ENCODE measurements at regions of chr7 and their contacts with region 1.

Region 1: GRCh38 chr7:105876091-105876963 is at the start of gene ATXN7L1:
- DNase-seq: peak; percentile 83 to 96 (median 92)
- ATAC-seq: peak; percentile 90
- H3K4me3 ChIP-seq: peak within 1 kb of the TSS; percentile 96
- H3K4me3 Mint-ChIP-seq: peak within 1 kb of the TSS; percentile 99
- H3K27ac ChIP-seq: peak within 1 kb of the TSS; percentile 55 to 77
- H3K27ac Mint-ChIP-seq: peak within 1 kb of the TSS; percentile 98
- H3K4me1 ChIP-seq: peaks cover 47% of the 10 kb centered on the region
- H3K4me1 Mint-ChIP-seq: peaks cover 81% of the 10 kb centered on the region
- H3K27me3 ChIP-seq: no peaks in the 10 kb centered on the region
- H3K27me3 Mint-ChIP-seq: no peaks in the 10 kb centered on the region
- CTCF ChIP-seq: peak; percentile 12
- total RNA-seq, gene ATXN7L1: 27.3 to 29.2 TPM

Region 2: DNA sequence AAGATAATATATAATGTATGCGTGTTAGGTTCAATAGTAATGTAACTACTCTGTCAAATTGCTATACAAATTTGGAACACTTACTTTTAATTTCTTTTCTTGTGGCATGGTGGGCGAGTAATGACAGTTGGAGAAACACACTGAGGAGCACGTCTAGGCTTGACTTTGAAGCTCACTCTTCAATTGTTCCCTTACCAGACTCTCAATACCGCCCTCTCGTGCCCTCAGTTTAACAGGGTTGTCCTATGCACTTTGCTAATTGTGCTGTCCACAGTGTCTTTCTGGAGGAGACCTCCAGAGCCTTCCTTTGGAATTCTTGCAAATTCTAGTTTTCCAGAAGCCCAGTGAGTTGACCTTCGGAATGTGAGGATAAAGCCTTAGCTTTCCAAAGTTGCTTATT is 1779.6 kb before region 1 on chr7:
- CTCF ChIA-PET with region 1: no interaction called
- POLR2A ChIA-PET with region 1: no interaction called
- intact Hi-C with region 1: no loop called
- DNase-seq: no peak
- ATAC-seq: no peak
- H3K4me3 ChIP-seq: no peak overlapping the region
- H3K4me3 Mint-ChIP-seq: no peak overlapping the region
- H3K27ac ChIP-seq: no peak overlapping the region
- H3K27ac Mint-ChIP-seq: no peak overlapping the region
- H3K4me1 ChIP-seq: no peaks in the 10 kb centered on the region
- H3K4me1 Mint-ChIP-seq: no peaks in the 10 kb centered on the region
- H3K27me3 ChIP-seq: peaks cover 0 to 2% of the 10 kb centered on the region in 2 experiments
- H3K27me3 Mint-ChIP-seq: peaks cover 33% of the 10 kb centered on the region
- CTCF ChIP-seq: no peak

Region 3: GRCh38 chr7:105522062-105522936 is 354.0 kb before region 1 on chr7 and contains the start of gene PUS7:
- CTCF ChIA-PET with region 1: interaction called, 4 read pairs
- POLR2A ChIA-PET with region 1: no interaction called
- intact Hi-C with region 1: loop called in 1 of 2 experiments (anchors 10 kb)
- DNase-seq: peak; percentile 61 to 92 (median 76)
- ATAC-seq: peak; percentile 94
- H3K4me3 ChIP-seq: peak within 1 kb of the TSS; percentile 57
- H3K4me3 Mint-ChIP-seq: peak within 1 kb of the TSS; percentile 98
- H3K27ac ChIP-seq: peak within 1 kb of the TSS; percentile 21 to 67
- H3K27ac Mint-ChIP-seq: peak within 1 kb of the TSS; percentile 85
- H3K4me1 ChIP-seq: peaks cover 18% of the 10 kb centered on the region
- H3K4me1 Mint-ChIP-seq: peaks cover 15% of the 10 kb centered on the region
- H3K27me3 ChIP-seq: no peaks in the 10 kb centered on the region
- H3K27me3 Mint-ChIP-seq: no peaks in the 10 kb centered on the region
- CTCF ChIP-seq: no peak
- total RNA-seq, gene PUS7: 2.7 TPM

Region 4: DNA sequence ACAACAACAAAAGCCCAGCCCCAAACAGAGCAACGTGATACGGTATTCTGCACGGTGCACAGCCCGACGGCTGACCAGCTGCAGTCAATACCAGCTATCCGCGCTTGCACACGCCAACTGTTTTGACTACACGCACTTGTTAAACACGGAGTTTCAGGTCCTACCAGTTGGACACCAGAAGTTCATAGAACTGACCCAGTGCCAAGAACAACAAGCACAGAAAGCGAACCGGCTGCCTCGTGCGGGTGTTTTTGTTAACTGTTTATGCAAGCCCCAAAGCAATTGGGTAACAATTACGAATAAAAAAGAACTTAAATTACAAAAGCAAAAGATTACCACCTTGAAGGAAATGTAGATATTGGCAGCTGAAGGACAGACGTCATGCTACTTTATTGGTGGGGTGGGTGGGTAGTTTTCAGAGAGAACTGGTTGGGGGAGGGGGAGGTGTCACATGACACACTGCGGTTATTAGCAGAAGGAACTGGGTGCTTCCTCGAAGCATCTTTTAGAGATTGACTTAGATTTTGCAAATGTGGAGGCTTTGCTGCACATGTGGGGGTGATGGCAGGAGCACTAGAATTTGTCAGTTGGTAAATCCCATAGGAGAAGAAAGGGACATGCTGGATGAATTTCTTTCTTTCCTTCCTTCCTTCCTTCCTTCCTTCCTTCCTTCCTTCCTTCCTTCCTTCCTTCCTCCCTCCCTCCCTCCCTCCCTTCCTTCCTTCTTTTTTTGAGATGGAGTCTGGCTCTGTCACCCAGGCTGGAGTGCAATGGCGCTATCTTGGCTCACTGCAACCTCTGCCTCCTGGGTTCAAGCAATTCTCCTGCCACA is 184.4 kb before region 1 on chr7:
- CTCF ChIA-PET with region 1: no interaction called
- POLR2A ChIA-PET with region 1: interaction called, 11 read pairs
- intact Hi-C with region 1: loop called in 1 of 2 experiments (anchors 5 kb)
- DNase-seq: peak; percentile 50 to 94 (median 68)
- ATAC-seq: peak; percentile 82
- H3K4me3 ChIP-seq: peak overlapping the region; percentile 92
- H3K4me3 Mint-ChIP-seq: peak overlapping the region; percentile 87
- H3K27ac ChIP-seq: peak overlapping the region; percentile 94 to 97
- H3K27ac Mint-ChIP-seq: peak overlapping the region; percentile 98
- H3K4me1 ChIP-seq: peaks cover 53% of the 10 kb centered on the region
- H3K4me1 Mint-ChIP-seq: peaks cover 62% of the 10 kb centered on the region
- H3K27me3 ChIP-seq: no peaks in the 10 kb centered on the region
- H3K27me3 Mint-ChIP-seq: no peaks in the 10 kb centered on the region
- CTCF ChIP-seq: no peak

Region 5: DNA sequence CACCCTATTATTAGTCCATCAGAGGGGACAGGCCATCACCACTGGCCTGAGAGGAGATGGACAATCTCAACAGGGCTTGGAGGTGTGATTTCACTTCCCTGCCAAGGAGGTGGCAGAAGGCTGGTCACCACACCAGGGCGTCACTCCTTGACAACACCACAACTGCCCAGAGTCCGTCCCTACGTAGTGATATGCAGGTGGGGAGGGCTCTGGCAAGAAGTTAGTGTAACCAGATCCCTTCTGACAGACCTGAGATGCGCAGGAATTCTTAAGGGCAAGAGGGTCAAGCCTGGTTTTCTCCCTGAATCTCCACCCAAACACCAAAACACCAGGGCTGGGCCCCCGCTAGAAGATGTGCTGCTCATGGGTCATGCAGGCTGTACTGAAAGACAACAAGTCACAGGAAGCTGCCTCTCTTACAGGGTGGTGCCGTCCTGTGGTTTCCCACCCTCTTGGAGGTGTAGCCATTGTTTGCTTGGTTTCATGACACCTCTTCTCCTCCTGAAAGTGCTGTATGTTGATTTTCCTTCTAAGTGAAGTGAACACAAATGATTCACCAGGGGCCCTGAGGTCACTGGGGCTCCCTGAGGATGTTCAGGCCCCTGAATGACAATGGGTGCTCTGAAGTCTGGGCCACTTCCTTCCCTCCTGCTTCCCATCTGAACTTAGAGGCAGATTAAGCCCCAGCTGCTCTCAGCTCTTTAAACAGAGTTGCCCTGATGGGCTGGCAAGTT is 27.0 kb before region 1 on chr7:
- CTCF ChIA-PET with region 1: interaction called, 3 read pairs
- POLR2A ChIA-PET with region 1: interaction called, 25 read pairs
- intact Hi-C with region 1: loop called (anchors 1 to 2 kb)
- DNase-seq: peak; percentile 20 to 91 (median 62)
- ATAC-seq: peak; percentile 89
- H3K4me3 ChIP-seq: peak overlapping the region; percentile 15
- H3K4me3 Mint-ChIP-seq: peak overlapping the region; percentile 78
- H3K27ac ChIP-seq: peak overlapping the region; percentile 48 to 59
- H3K27ac Mint-ChIP-seq: peak overlapping the region; percentile 90
- H3K4me1 ChIP-seq: peaks cover 51% of the 10 kb centered on the region
- H3K4me1 Mint-ChIP-seq: peaks cover 69% of the 10 kb centered on the region
- H3K27me3 ChIP-seq: no peaks in the 10 kb centered on the region
- H3K27me3 Mint-ChIP-seq: no peaks in the 10 kb centered on the region
- CTCF ChIP-seq: no peak

Region 6: GRCh38 chr7:106022193-106022821 is 146.0 kb after region 1 on chr7:
- CTCF ChIA-PET with region 1: interaction called, 7 read pairs
- POLR2A ChIA-PET with region 1: interaction called, 17 read pairs
- intact Hi-C with region 1: loop called in 1 of 2 experiments (anchors 5 kb)
- DNase-seq: peak; percentile 66 to 93 (median 80)
- ATAC-seq: peak; percentile 83
- H3K4me3 ChIP-seq: peak overlapping the region; percentile 25
- H3K4me3 Mint-ChIP-seq: peak overlapping the region; percentile 26
- H3K27ac ChIP-seq: peak overlapping the region; percentile 80 to 85
- H3K27ac Mint-ChIP-seq: peak overlapping the region; percentile 98
- H3K4me1 ChIP-seq: peaks cover 70% of the 10 kb centered on the region
- H3K4me1 Mint-ChIP-seq: peaks cover 81% of the 10 kb centered on the region
- H3K27me3 ChIP-seq: no peaks in the 10 kb centered on the region
- H3K27me3 Mint-ChIP-seq: no peaks in the 10 kb centered on the region
- CTCF ChIP-seq: no peak

Region 7: DNA sequence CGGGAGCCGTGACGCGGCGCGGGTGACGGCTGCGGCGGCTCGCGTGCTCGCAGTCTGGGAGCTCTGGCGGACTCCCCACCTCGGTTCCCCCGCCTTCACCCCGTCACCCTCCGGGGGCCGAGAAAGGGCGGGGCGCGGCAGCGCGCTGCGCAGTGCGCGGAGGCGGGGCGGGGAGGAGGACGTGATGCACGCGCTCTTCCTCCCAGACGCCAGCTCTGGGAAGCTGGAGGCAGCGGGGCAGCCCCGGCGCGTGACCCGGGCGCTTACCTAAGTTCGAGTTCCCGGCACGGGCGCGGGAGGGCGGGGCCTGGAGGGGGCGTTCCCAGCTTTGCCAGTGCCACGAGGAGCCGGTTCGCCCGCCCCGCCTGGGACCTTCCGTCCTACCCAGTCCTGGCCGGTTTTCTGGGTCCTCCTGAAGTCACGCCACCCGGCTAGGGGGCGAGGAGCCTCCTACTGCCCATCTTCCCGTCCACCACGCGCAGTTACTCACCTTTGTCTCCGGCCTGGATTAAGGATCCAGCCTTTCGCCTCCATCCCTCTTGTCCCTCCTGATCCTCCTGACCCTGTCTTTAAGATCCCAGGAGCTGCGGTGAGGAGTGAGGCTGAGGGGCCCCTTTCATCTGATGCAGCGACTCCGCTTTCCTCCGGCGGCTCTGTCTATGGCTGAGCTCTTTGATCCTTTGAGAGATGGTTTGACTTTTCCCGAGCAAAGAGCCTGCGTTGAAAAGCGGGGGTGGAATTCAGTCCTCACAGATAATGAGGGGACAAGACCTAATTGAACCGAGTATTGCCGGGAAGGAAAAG is 408.9 kb after region 1 on chr7:
- CTCF ChIA-PET with region 1: no interaction called
- POLR2A ChIA-PET with region 1: no interaction called
- intact Hi-C with region 1: loop called in 1 of 2 experiments (anchors 10 kb)
- DNase-seq: peak; percentile 92 to 100 (median 97)
- ATAC-seq: peak; percentile 88
- H3K4me3 ChIP-seq: peak overlapping the region; percentile 75
- H3K4me3 Mint-ChIP-seq: peak overlapping the region; percentile 99
- H3K27ac ChIP-seq: peak overlapping the region; percentile 84 to 91
- H3K27ac Mint-ChIP-seq: peak overlapping the region; percentile 94
- H3K4me1 ChIP-seq: peaks cover 9% of the 10 kb centered on the region
- H3K4me1 Mint-ChIP-seq: peaks cover 37% of the 10 kb centered on the region
- H3K27me3 ChIP-seq: no peaks in the 10 kb centered on the region
- H3K27me3 Mint-ChIP-seq: no peaks in the 10 kb centered on the region
- CTCF ChIP-seq: no peak

Measured in CD4-positive, alpha-beta T cell (primary cell).